ENCODE measurements at regions of chr5 and their contacts with region 1.

Region 1: DNA sequence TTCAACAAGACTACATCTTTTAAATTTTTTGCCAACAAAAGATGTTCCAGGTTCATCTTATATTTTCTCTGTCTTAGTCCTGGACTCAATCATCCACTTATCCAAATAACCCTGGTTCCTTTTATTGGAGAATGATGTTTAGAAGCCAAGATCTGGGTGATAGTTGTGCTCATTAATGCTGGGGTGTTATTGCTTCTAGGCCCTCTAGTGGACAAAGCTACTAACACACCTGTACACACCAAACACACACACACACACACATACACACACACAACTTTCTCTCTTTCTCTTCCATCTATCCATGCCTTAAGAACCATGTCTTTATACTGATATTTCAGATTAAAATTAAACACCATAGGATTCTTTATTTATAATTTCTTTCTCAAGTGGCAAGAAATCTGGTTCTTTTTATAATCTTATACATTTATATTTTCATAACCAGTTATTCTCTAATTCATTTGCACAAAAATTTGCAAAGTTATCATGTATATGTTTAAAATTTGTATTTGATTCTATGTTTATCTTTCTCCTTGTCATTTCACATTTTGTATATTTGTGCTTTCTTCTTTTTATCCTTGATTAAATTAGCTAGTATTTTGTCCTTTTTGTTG is 179.1 kb upstream of the SMIM23 start:
- DNase-seq: no peak
- H3K4me3 ChIP-seq: no peak overlapping the region
- H3K27ac ChIP-seq: no peak overlapping the region
- H3K4me1 ChIP-seq: no peaks in the 10 kb centered on the region
- H3K27me3 ChIP-seq: no peaks in the 10 kb centered on the region
- CTCF ChIP-seq: peak; percentile 69

Region 2: GRCh38 chr5:171647032-171647903 is 40.7 kb after region 1 on chr5:
- CTCF ChIA-PET with region 1: no interaction called
- POLR2A ChIA-PET with region 1: no interaction called
- intact Hi-C with region 1: no loop called
- DNase-seq: peak; percentile 64 to 74
- H3K4me3 ChIP-seq: no peak overlapping the region
- H3K27ac ChIP-seq: no peak overlapping the region
- H3K4me1 ChIP-seq: peaks cover 14% of the 10 kb centered on the region
- H3K27me3 ChIP-seq: no peaks in the 10 kb centered on the region
- CTCF ChIP-seq: no peak; the same call in 1 of the 2 replicates

Region 3: GRCh38 chr5:172182291-172182690 is 575.8 kb after region 1 on chr5:
- CTCF ChIA-PET with region 1: no interaction called
- POLR2A ChIA-PET with region 1: interaction called, 34 read pairs
- intact Hi-C with region 1: no loop called
- DNase-seq: no peak
- H3K4me3 ChIP-seq: no peak overlapping the region
- H3K27ac ChIP-seq: no peak overlapping the region
- H3K4me1 ChIP-seq: peaks cover 21% of the 10 kb centered on the region
- H3K27me3 ChIP-seq: no peaks in the 10 kb centered on the region
- CTCF ChIP-seq: no peak

Measured in PC-9 (cell line).